ENCODE measurements at regions of chr16 and their contacts with region 1.

Region 1: GRCh38 chr16:58481226-58481869 is 18.6 kb upstream of the NDRG4 start:
- DNase-seq: no peak
- H3K4me3 ChIP-seq: no peak overlapping the region
- H3K27ac ChIP-seq: no peak overlapping the region
- H3K4me1 ChIP-seq: peaks cover 7% of the 10 kb centered on the region; the same call in 1 of the 2 replicates
- H3K27me3 ChIP-seq: no peaks in the 10 kb centered on the region
- CTCF ChIP-seq: no peak

Region 2: GRCh38 chr16:58336332-58337089 is 144.8 kb before region 1 on chr16:
- CTCF ChIA-PET with region 1: interaction called, 17 read pairs
- POLR2A ChIA-PET with region 1: no interaction called
- intact Hi-C with region 1: no loop called
- DNase-seq: peak; percentile 77 to 88
- H3K4me3 ChIP-seq: peak overlapping the region; percentile 23; the same call in 1 of the 2 replicates
- H3K27ac ChIP-seq: no peak overlapping the region
- H3K4me1 ChIP-seq: peaks cover 24% of the 10 kb centered on the region
- H3K27me3 ChIP-seq: no peaks in the 10 kb centered on the region
- CTCF ChIP-seq: peak; percentile 93

Region 3: GRCh38 chr16:58464047-58464915 is 17.1 kb before region 1 on chr16:
- CTCF ChIA-PET with region 1: no interaction called
- POLR2A ChIA-PET with region 1: no interaction called
- intact Hi-C with region 1: no loop called
- DNase-seq: peak in 1 of 2 experiments; percentile 29
- H3K4me3 ChIP-seq: peak overlapping the region; percentile 79
- H3K27ac ChIP-seq: no peak overlapping the region
- H3K4me1 ChIP-seq: peaks cover 28% of the 10 kb centered on the region
- H3K27me3 ChIP-seq: peaks cover 9% of the 10 kb centered on the region; the same call in 1 of the 2 replicates
- CTCF ChIP-seq: no peak

Region 4: DNA sequence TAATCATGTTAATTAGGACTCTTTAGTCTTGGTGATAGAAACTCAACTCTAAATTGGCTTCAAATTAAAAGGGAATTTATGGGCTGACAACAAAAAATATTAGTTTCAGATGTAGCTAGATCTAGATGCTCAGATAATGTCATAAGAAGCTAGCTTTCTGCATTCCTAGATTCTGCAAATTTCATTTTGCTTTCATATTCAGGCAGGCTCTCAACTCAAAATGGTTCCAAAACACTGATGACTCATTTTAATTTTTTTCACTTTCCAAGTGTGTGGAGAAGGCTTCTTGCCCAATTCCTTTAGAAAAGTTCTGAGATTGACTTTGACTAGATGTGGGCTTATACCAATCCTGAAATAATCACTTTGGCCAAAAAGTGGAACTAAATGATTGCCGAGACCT is 489.4 kb after region 1 on chr16:
- CTCF ChIA-PET with region 1: no interaction called
- POLR2A ChIA-PET with region 1: interaction called, 11 read pairs
- intact Hi-C with region 1: no loop called
- DNase-seq: no peak
- H3K4me3 ChIP-seq: no peak overlapping the region
- H3K27ac ChIP-seq: no peak overlapping the region
- H3K4me1 ChIP-seq: no peaks in the 10 kb centered on the region
- H3K27me3 ChIP-seq: no peaks in the 10 kb centered on the region
- CTCF ChIP-seq: no peak

Region 5: GRCh38 chr16:59274141-59274540 is 792.8 kb after region 1 on chr16:
- CTCF ChIA-PET with region 1: no interaction called
- POLR2A ChIA-PET with region 1: no interaction called
- intact Hi-C with region 1: no loop called
- DNase-seq: no peak
- H3K4me3 ChIP-seq: no peak overlapping the region
- H3K27ac ChIP-seq: no peak overlapping the region
- H3K4me1 ChIP-seq: no peaks in the 10 kb centered on the region
- H3K27me3 ChIP-seq: peaks cover 5% of the 10 kb centered on the region; the same call in 1 of the 2 replicates
- CTCF ChIP-seq: no peak